ENCODE measurements at regions of chr17 and their contacts with region 1.

Region 1: GRCh38 chr17:81142301-81143199 is 22.8 kb upstream of the PVALEF start:
- DNase-seq: peak; percentile 5
- H3K4me3 ChIP-seq: no peak overlapping the region
- CTCF ChIP-seq: peak; percentile 83

Region 2: DNA sequence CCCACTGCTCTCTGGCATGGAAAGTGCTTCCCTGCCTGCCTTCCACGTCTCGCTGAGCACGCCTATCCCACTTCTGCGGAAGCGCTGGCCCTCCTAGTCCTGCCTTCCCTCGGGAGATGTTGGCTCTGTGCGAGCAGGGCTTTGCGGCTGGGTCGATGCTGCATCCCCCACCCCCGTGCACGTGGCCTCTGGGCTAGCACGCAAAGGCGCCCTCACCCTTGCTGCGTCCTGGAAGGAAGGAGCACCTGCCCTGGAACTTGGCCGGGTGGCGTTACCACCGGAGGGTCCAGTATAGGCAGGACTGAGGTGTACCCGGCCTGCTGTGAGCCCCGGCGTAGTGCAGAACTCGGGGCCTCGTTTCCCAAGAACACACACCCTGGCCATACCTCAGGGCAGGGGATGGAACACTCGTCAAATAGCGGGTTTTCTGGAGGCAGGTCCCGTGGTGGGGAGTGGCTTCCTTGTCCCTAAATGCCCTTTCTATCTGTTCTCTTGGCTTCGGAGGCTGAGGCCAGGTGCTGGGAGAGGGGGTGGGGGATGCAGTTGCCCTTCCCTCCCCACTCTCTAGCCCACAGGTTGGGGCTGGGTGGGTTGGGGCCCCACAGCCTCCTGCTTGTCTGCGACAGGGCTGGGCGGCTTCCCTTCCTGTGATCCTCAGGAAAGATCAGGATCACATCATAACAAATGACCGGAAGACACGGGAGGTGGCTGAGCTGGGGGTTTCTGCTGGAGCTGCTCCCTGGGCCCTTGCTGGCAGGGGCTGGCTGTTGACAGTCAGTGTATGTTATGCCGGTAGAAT is 90.2 kb before region 1 on chr17:
- CTCF ChIA-PET with region 1: no interaction called
- POLR2A ChIA-PET with region 1: no interaction called
- DNase-seq: no peak
- H3K4me3 ChIP-seq: no peak overlapping the region
- CTCF ChIP-seq: no peak

Region 3: DNA sequence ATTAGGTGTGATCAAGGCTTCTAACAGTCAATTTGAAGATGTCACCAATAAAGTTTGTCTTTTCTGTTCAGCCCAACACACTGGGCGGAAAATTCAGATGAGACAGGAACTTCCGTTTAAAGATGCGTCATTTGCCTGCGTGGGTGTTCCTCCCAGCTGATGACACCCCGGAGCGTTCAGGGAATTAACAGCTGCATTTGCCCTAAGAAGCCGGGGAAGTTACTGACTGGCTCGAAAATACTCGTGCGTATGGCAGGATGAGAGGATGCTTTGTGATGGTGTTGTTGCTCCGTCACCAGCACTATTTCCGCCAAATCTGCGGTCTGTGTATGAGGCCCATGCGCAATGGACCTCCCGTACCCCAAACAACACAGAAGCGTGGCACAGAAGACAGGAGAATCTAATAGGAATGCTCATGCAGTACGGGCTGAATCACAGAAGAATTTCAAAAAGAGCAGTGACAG is 10.8 kb after region 1 on chr17:
- CTCF ChIA-PET with region 1: interaction called, 25 read pairs
- POLR2A ChIA-PET with region 1: no interaction called
- DNase-seq: no peak
- H3K4me3 ChIP-seq: no peak overlapping the region
- CTCF ChIP-seq: no peak

Region 4: GRCh38 chr17:81189670-81190530 is 47.4 kb after region 1 on chr17:
- CTCF ChIA-PET with region 1: interaction called, 10 read pairs
- POLR2A ChIA-PET with region 1: no interaction called
- DNase-seq: no peak
- H3K4me3 ChIP-seq: no peak overlapping the region
- CTCF ChIP-seq: peak; percentile 6

Region 5: DNA sequence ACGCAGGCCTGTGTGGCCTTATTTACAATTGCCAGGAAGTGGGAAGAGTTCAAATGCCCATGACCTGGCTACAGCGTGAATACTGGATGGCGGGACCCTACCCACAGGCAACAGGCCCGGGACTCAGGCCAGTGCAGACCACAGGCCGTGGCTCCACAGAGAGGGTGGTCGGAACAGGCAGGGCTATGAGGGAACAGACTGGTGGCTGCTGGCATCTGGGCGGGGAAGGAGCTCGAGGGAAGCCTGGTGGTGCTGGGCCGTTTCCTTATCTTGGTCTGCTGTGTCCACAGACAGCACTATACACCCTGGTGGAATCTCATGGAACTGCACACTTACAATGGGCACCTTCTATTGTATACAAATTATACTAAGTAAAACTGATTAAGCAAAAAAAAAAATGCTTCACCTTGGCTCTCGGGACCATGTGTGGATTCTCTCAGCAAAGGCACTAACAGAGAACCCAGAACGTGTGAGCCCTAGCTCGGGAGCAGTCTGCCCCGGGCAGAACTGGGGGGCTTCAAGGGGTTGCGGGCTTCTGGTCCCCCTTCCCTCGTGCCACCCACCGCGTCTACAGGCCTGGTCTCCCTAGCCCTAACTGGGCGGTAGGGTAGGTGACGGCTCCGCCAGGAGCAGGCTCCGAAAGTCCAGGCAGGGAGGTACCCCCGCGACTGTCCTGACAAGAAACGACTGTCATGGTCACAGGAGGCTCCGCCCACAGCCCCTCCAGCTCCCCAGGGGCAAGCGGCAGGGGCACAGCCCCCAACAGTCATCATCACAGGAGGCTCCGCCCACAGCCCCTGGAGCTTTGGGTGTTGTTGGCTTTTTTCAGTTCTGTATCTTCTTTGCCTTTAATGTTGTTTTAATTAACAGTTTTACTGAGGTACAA is 58.4 kb after region 1 on chr17:
- CTCF ChIA-PET with region 1: interaction called, 28 read pairs
- POLR2A ChIA-PET with region 1: no interaction called
- DNase-seq: peak; percentile 14
- H3K4me3 ChIP-seq: no peak overlapping the region
- CTCF ChIP-seq: peak; percentile 47

Region 6: DNA sequence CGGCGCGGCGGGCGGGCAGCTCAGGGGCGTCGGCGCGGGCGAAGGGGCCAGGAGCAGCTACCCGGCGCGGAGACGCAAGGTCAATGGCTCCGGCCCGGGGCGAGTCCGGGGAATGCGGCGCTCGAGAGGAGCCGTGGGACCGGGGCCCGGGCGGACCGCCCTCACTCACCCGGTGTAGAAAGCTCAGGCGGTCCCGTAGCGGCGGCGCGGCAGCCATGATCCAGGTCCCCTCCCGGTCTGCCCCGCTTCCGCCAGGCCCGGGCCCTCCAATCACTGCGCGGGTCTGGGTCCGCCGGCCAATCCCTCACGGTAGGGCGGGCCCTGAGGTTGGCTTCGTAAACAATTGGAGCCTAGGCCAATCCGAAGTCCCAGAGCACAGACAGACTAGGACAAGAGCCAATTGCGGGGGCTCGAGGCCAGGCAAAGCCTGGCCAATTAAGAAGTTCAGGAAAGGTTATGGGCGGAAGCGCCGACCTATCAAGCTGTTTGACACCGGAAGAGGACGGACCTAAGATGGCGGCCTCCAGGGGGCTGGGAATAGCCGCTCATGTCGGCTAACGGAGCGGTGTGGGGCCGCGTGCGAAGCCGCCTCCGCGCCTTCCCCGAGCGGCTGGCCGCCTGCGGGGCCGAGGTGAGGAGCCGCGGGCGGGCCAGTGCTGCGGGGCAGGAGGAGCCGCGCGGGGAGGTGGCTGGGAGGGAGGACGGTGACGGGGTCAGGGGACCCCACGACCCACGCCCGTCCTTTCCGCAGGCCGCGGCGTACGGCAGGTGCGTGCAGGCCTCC is 96.5 kb after region 1 on chr17 and contains the starts of genes NDUFAF8 and TEPSIN:
- CTCF ChIA-PET with region 1: interaction called, 13 read pairs
- POLR2A ChIA-PET with region 1: interaction called, 3 read pairs
- DNase-seq: peak; percentile 97
- H3K4me3 ChIP-seq: peak within 1 kb of the TSS; percentile 91
- CTCF ChIP-seq: no peak

Region 7: GRCh38 chr17:81394921-81395599 is 252.5 kb after region 1 on chr17 and contains the start of gene BAHCC1:
- CTCF ChIA-PET with region 1: no interaction called
- POLR2A ChIA-PET with region 1: no interaction called
- DNase-seq: peak; percentile 96
- H3K4me3 ChIP-seq: peak within 1 kb of the TSS; percentile 69
- CTCF ChIP-seq: peak; percentile 10